CD4-positive, alpha-beta memory T cell (primary cell): ENCODE measurements at regions of chr12 and their contacts with region 1.

Region 1: GRCh38 chr12:4763549-4763948 is 43.3 kb downstream of the GALNT8 start:
- DNase-seq: no peak
- H3K4me3 ChIP-seq: no peak overlapping the region
- H3K4me3 Mint-ChIP-seq: no peak overlapping the region
- H3K27ac ChIP-seq: no peak overlapping the region
- H3K27ac Mint-ChIP-seq: no peak overlapping the region
- H3K4me1 ChIP-seq: no peaks in the 10 kb centered on the region
- H3K4me1 Mint-ChIP-seq: peaks cover 0 to 11% (median under 1%) of the 10 kb centered on the region in 4 donors
- H3K27me3 ChIP-seq: no peaks in the 10 kb centered on the region
- H3K27me3 Mint-ChIP-seq: no peaks in the 10 kb centered on the region

Region 2: DNA sequence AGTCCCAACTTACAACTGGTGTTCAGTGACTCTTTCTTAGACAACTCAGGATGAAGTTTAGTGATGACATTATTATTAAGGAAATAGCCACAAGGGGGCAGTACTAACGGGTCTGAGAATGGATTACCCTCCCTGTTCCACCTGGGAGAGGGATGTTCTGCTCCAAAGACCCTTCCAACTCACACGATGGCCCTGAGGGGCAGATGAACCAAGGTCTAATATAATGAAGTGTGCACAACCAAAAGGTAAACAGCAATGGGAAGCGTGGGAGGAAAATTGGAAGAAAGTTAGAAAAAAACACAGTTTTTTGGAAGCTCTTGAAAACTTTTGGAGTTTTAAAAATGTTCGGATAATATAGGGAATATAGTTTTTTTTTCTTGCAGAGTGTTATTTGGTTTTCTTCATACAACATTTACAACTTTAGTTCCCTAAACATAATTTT is 341.9 kb before region 1 on chr12:
- CTCF ChIA-PET with region 1: interaction called, 3 read pairs
- POLR2A ChIA-PET with region 1: no interaction called
- intact Hi-C with region 1: loop called (anchors 5 kb)
- DNase-seq: peak in 4 of 5 donors; percentile 42 to 57 (median 46)
- H3K4me3 ChIP-seq: no peak overlapping the region
- H3K4me3 Mint-ChIP-seq: no peak overlapping the region
- H3K27ac ChIP-seq: no peak overlapping the region
- H3K27ac Mint-ChIP-seq: peak overlapping the region in 1 of 7 donors; percentile 38
- H3K4me1 ChIP-seq: no peaks in the 10 kb centered on the region
- H3K4me1 Mint-ChIP-seq: peaks cover 0 to 1% (median 0%) of the 10 kb centered on the region in 4 donors
- H3K27me3 ChIP-seq: no peaks in the 10 kb centered on the region
- H3K27me3 Mint-ChIP-seq: peaks cover 5 to 6% of the 10 kb centered on the region in 2 donors

Region 3: DNA sequence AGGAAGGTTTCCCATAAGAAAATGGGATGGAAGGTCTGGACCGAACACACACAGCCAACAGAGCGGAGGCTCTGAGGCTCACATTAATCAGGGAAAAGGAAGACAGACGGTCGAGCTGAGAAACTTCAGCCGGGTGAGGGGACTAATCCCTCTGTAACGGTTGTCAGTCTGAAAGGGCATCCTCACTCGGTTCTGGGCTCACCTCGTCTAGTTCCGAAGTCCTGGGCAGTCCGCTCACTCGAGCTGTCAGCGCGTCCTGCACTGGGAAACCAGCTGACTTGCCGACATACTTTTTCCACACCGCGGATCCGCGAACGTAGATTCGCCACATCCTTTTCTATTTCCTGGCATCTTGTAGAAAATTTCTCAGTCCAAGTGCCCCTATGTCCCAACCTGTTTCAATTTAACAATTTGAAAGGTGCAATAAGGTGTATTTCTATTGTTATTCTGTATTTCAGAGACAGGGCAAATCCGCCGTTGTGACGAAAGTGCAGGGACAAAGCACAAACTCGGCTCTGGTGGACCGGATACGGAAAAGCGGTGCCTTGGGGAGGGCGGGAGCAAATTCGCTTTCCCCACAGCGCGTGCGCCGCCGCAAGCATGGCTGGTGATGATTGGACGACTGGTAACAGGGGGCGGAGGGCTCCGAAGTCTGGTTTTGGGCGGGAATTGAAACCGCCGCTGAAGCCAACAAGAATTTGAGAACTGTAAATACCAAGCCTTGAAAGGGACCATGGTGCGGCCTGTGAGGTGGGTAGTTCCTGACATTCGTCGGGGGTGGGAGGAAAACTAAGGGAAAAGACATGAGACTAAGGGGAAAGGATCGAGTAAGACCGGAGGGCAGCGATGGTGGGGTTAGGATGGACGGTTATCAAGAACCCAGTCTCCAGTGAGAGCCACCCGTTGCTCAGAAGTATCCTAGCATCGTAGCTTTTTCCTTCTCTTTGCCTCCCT is 225.1 kb before region 1 on chr12 and contains the start of gene RAD51AP1:
- CTCF ChIA-PET with region 1: no interaction called
- POLR2A ChIA-PET with region 1: no interaction called
- intact Hi-C with region 1: no loop called
- DNase-seq: peak; percentile 96 to 98 (median 98)
- H3K4me3 ChIP-seq: peak within 1 kb of the TSS; percentile 73 to 90
- H3K4me3 Mint-ChIP-seq: peak within 1 kb of the TSS; percentile 93 to 99 (median 96)
- H3K27ac ChIP-seq: peak within 1 kb of the TSS; percentile 79
- H3K27ac Mint-ChIP-seq: peak within 1 kb of the TSS; percentile 94 to 99 (median 98)
- H3K4me1 ChIP-seq: peaks cover 21% of the 10 kb centered on the region
- H3K4me1 Mint-ChIP-seq: peaks cover 13 to 34% (median 26%) of the 10 kb centered on the region in 4 donors
- H3K27me3 ChIP-seq: no peaks in the 10 kb centered on the region
- H3K27me3 Mint-ChIP-seq: no peaks in the 10 kb centered on the region
- total RNA-seq, gene RAD51AP1: 0.58 to 1.5 TPM

Region 4: GRCh38 chr12:4604684-4605193 is 158.8 kb before region 1 on chr12:
- CTCF ChIA-PET with region 1: interaction called, 7 read pairs
- POLR2A ChIA-PET with region 1: no interaction called
- intact Hi-C with region 1: loop called (anchors 1 kb)
- DNase-seq: peak; percentile 76 to 80 (median 78)
- H3K4me3 ChIP-seq: peak overlapping the region; percentile 85 to 89
- H3K4me3 Mint-ChIP-seq: peak overlapping the region; percentile 96 to 100 (median 99)
- H3K27ac ChIP-seq: peak overlapping the region; percentile 34
- H3K27ac Mint-ChIP-seq: peak overlapping the region; percentile 56 to 97 (median 93)
- H3K4me1 ChIP-seq: peaks cover 21% of the 10 kb centered on the region
- H3K4me1 Mint-ChIP-seq: peaks cover 12 to 33% (median 25%) of the 10 kb centered on the region in 4 donors
- H3K27me3 ChIP-seq: no peaks in the 10 kb centered on the region
- H3K27me3 Mint-ChIP-seq: peaks cover 7% of the 10 kb centered on the region in 2 donors

Region 5: GRCh38 chr12:4690760-4691159 is 72.8 kb before region 1 on chr12:
- CTCF ChIA-PET with region 1: no interaction called
- POLR2A ChIA-PET with region 1: no interaction called
- intact Hi-C with region 1: no loop called
- DNase-seq: no peak
- H3K4me3 ChIP-seq: no peak overlapping the region
- H3K4me3 Mint-ChIP-seq: no peak overlapping the region
- H3K27ac ChIP-seq: no peak overlapping the region
- H3K27ac Mint-ChIP-seq: no peak overlapping the region
- H3K4me1 ChIP-seq: no peaks in the 10 kb centered on the region
- H3K4me1 Mint-ChIP-seq: no peaks in the 10 kb centered on the region
- H3K27me3 ChIP-seq: no peaks in the 10 kb centered on the region
- H3K27me3 Mint-ChIP-seq: no peaks in the 10 kb centered on the region

Region 6: GRCh38 chr12:4918950-4919660 is 155.6 kb after region 1 on chr12:
- CTCF ChIA-PET with region 1: no interaction called
- POLR2A ChIA-PET with region 1: no interaction called
- intact Hi-C with region 1: no loop called
- DNase-seq: no peak
- H3K4me3 ChIP-seq: no peak overlapping the region
- H3K4me3 Mint-ChIP-seq: no peak overlapping the region
- H3K27ac ChIP-seq: no peak overlapping the region
- H3K27ac Mint-ChIP-seq: no peak overlapping the region
- H3K4me1 ChIP-seq: no peaks in the 10 kb centered on the region
- H3K4me1 Mint-ChIP-seq: no peaks in the 10 kb centered on the region
- H3K27me3 ChIP-seq: no peaks in the 10 kb centered on the region
- H3K27me3 Mint-ChIP-seq: peaks cover 21 to 43% of the 10 kb centered on the region in 2 donors